ENCODE measurements at regions of chr22 and their contacts with region 1.

Region 1: GRCh38 chr22:25777870-25778269 is 35.9 kb downstream of the MYO18B start:
- DNase-seq: peak; percentile 73

Region 2: GRCh38 chr22:25880524-25880923 is 102.7 kb after region 1 on chr22:
- in situ Hi-C with region 1: no loop called
- DNase-seq: no peak

Region 3: GRCh38 chr22:26321469-26321913 is 543.6 kb after region 1 on chr22:
- in situ Hi-C with region 1: loop called (anchors 10 kb)
- DNase-seq: peak; percentile 95

Measured in G401 (cell line).